Activated CD8-positive, alpha-beta memory T cell treated with anti-CD3 and anti-CD28 coated beads, Interleukin-2, amount 10 ng/mL, durations not matched to agents 7 days and 5 days (primary cell): ENCODE measurements at regions of chr13 and their contacts with region 1.

Region 1: GRCh38 chr13:25037057-25037813 is 58.7 kb upstream of the PABPC3 start:
- DNase-seq: peak; percentile 68
- ATAC-seq: peak; percentile 84
- H3K4me3 Mint-ChIP-seq: no peak overlapping the region
- H3K27ac Mint-ChIP-seq: no peak overlapping the region
- H3K4me1 Mint-ChIP-seq: no peaks in the 10 kb centered on the region
- H3K27me3 Mint-ChIP-seq: peaks cover 61% of the 10 kb centered on the region

Region 2: GRCh38 chr13:24995226-24995804 is 41.9 kb before region 1 on chr13:
- CTCF ChIA-PET with region 1: interaction called, 17 read pairs
- DNase-seq: peak; percentile 76
- ATAC-seq: peak; percentile 86
- H3K4me3 Mint-ChIP-seq: no peak overlapping the region
- H3K27ac Mint-ChIP-seq: no peak overlapping the region
- H3K4me1 Mint-ChIP-seq: peaks cover 4% of the 10 kb centered on the region
- H3K27me3 Mint-ChIP-seq: peaks cover 34% of the 10 kb centered on the region

Region 3: DNA sequence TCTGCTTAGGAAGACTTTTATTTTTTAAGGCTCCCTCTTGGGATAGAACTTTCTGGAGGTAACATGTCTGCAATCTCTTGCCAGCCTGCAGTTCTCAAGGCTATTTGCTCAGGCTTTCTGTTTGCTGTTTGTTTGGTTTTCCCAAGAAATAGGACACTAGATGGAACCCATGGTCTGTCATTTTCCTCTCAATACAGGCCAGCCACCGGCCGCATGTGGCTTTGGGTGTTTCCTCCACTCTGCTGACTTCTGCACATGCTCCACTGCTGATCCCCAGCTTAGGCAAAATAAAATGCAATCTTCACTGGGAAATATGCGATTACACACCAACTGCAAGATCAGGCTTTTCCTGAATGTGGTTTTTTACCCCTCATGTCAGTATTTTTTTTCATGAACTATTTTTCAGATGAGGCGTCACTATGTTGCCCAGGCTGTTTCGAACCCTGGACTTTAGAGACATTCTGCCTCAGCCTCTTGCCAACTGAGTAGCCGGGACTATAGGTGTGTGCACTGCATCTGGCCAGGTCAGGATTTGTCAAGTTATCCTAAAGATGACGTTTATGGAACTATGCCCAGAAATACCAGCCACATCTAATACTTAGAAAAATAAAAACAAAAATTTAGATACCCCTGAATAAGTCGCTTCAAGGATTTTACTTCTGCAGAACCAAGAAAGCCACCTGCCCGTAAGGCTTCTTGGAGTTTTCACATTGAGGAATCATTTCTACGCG is 35.6 kb before region 1 on chr13:
- CTCF ChIA-PET with region 1: interaction called, 15 read pairs
- DNase-seq: no peak
- ATAC-seq: no peak
- H3K4me3 Mint-ChIP-seq: no peak overlapping the region
- H3K27ac Mint-ChIP-seq: no peak overlapping the region
- H3K4me1 Mint-ChIP-seq: peaks cover 8% of the 10 kb centered on the region
- H3K27me3 Mint-ChIP-seq: peaks cover 61% of the 10 kb centered on the region